Left cardiac atrium (tissue), 4 donors: ENCODE measurements at regions of chr12 and their contacts with region 1.

Region 1: GRCh38 chr12:108664338-108665258 is 30.9 kb upstream of the SELPLG start:
- DNase-seq: peak; percentile 85
- ATAC-seq: peak; percentile 94

Region 2: GRCh38 chr12:108731105-108731865 is 66.7 kb after region 1 on chr12 and contains the start of gene CORO1C:
- intact Hi-C with region 1: loop called in 1 of 2 experiments (anchors 5 kb)
- DNase-seq: peak; percentile 98
- ATAC-seq: peak; percentile 87 to 92
- total RNA-seq, gene CORO1C: 95.0 to 109 TPM

Region 3: DNA sequence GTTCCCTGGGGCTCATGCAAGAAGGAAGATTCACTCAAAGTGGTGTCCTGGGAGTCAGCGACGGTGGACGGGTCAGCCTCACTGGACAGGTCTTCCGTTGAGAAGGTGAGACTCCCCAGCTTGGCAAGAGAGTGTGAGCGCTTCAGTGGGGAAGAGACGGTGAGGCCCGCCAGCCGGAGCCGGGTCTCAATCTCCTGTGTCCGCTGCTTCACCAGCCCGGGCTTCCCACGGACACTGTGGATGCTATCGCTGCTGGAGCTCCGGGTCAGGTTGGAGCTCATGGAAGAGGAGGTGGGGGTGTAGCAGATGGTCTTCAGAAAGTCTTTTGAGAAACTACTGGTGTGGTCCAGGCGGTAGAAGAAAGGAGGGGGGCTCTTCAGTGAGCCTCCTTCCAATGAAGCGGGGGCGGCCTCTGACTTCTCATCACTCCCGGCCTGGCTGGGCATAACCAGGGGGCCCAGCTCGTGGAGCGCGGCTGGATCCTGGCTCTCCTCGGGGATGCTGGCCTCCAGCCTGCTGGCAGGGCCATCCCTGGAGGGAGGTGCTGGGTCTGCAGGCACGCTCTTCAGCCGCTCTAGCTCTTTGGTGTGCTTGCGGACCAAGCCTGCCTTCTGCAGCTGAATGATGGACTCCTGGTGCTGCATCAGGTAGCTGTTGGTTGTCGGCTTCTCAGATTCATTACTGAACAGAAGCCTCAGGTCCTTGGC is 123.6 kb after region 1 on chr12:
- intact Hi-C with region 1: loop called in 1 of 2 experiments (anchors 5 kb)
- DNase-seq: peak; percentile 63
- ATAC-seq: peak; percentile 77 to 88

Region 4: DNA sequence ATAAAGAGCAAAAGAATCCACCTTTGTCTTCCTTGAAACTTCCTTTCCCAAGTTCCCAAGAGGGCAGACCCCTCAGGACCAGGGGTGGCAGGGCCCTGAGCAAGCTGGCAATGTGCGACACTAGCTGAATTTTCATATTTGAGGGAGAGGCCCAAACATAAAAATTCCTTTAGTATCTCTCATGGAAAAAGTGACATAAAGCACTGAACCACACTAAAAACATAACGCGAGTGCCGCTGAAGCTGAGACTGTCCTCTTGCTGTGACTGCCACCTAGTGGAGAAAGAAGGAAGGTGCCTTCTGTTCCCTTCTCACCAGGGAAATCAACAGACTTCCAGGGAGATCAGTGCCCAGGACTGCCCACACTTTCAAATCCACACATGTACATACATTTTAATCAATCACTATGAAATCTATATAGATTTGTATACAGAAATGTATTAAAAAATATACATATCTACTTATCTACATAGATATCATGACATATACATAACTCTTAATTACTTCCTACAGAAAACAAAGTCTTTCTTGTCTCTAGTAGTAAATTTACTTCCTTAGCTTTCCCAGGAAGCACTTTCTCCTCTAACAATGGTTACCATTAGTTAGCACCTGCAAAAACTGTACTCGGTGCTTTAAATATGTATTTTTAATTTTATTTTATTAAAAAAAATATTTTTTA is 139.0 kb after region 1 on chr12:
- intact Hi-C with region 1: loop called (anchors 2 kb)
- DNase-seq: peak; percentile 73
- ATAC-seq: peak; percentile 60 to 73

Region 5: DNA sequence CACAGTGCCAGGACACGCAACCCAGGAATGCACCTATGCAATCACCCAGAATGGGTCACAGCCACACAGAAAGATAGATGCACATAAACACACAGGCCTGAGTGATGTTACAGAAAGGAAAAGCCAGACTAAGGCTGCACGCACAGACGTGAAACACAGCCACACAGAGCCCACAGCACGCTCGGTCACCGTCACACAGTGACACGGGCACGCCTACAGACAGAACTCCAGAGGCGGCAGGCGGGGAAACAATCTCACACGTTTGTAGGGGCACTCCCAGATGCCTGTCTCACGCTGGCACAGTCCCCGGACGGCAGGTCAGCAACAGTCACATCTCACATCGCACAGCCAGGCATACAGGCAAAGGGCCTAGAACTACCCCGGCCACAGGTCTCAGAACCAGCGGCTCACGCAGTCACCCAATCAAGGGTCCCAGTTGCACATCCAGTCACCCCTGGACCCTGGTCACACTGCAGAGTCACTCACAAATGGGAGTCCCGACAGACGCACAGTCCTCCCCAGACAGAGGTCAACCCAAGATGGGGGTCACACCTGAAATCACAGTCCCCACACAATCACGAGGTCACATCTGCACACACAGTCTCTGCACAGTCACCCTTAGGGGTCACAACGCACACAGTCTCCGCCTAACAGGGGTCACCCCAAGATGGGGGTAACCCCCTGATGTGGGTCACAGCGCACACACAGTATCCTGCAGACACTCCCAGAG is 192.0 kb after region 1 on chr12:
- intact Hi-C with region 1: loop called in 1 of 2 experiments (anchors 10 kb)
- DNase-seq: peak; percentile 87
- ATAC-seq: peak; percentile 41 to 51

Region 6: GRCh38 chr12:108950991-108951739 is 286.6 kb after region 1 on chr12:
- intact Hi-C with region 1: loop called in 1 of 2 experiments (anchors 5 kb)
- DNase-seq: peak; percentile 70
- ATAC-seq: peak; percentile 79 to 81